ENCODE measurements at regions of chr11 and their contacts with region 1.

Region 1: DNA sequence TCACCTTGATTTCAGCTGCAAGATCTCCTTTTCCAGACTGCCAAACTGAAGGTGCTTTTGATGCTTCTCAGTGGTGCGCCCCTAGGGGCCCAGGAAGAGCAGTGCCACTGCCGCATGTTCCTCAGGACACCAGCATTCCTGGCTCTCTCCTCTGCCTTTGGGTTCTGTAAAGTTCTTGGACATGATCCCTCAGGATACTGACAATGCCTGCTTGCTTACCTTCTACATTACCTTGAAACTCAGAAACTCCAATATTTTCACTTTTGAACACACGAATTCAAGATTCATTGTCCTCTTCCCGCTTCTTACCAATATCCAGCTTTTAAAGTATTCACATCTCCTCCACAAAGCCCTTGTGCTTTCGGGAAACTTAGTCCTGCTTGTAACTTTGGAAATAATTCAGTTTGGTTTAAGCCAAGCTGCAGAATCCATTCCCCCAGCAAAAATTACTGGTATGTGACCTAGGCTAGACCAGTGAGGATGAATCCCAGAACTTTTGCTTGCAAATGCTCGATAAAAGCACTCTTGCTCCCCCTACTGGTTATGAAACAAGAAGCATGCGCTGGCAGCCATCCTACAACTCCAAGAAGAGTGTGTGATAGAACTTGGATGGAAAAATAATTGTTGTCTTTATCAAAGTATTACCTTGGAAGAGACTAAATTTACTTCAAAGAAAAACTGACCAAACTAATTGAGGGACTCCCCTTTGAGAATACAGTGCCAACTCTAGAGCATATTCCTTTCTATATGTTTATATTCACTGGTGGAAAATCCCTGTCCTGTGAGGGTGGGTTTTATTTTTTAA is 16.5 kb upstream of the OR5B21 start:
- DNase-seq: peak; percentile 71
- ATAC-seq: peak; percentile 98
- H3K4me3 ChIP-seq: peak overlapping the region in 1 of 2 experiments; percentile 2; a peak in 1 of 4 replicates
- H3K27ac ChIP-seq: no peak overlapping the region
- H3K4me1 ChIP-seq: peaks cover 0 to 8% of the 10 kb centered on the region in 2 experiments; a peak in 3 of 4 replicates
- H3K27me3 ChIP-seq: 0 out of 2 replicates have a peak, but pooled peaks cover 4% of the 10 kb centered on the region
- CTCF ChIP-seq: peak; percentile 67 to 99 (median 78)
- POLR2A ChIP-seq: no peak
- RAD21 ChIP-seq: peak; percentile 64

Region 2: DNA sequence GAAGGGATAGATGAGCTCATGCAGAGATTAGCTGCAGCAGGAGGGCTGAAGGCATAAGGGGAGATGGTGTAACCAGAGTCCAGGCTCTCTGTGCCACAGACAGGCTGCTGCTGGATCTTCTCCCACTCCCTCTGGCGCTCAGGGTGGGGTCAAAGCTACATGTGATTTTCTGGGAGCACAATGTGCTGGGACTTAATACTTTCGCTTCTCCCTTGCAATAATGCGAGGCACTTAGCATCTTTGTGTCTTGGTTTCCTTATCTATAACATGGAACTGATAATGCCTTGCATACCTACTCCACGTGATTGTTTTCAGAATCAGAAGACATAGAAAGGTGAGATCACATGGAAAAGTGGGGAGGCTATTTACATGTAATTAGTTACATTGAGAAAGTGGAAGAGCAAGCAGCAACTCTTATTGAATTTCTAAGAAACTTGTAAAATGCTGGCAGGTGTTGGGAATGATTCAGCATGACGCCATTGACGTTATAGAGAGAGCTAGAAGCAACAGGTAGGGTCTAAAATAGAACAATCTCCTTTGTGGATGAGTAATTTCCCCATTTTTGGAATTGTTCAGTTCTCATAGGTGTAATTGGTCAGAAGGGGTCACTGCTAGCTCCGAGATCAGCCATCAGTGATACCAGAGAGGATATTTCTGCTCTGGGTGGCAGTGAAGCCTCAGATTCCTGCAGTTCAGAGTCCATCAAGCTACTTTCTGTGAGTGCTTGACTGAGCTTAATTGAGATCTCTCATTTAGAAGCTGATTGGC is 390.9 kb before region 1 on chr11:
- CTCF ChIA-PET with region 1: no interaction called
- POLR2A ChIA-PET with region 1: no interaction called
- RAD21 ChIA-PET with region 1: no interaction called
- intact Hi-C with region 1: loop called (anchors 10 kb)
- DNase-seq: no peak
- ATAC-seq: no peak
- H3K4me3 ChIP-seq: no peak overlapping the region
- H3K27ac ChIP-seq: no peak overlapping the region
- H3K4me1 ChIP-seq: no peaks in the 10 kb centered on the region
- H3K27me3 ChIP-seq: no peaks in the 10 kb centered on the region
- CTCF ChIP-seq: 0 out of 6 replicates have a peak, but pooled peaks of 1 of the 3 experiments have one; percentile 8
- POLR2A ChIP-seq: no peak
- RAD21 ChIP-seq: 0 out of 2 replicates have a peak, but pooled peaks have one; percentile 28

Region 3: GRCh38 chr11:58354727-58355126 is 169.7 kb before region 1 on chr11:
- CTCF ChIA-PET with region 1: no interaction called
- POLR2A ChIA-PET with region 1: no interaction called
- RAD21 ChIA-PET with region 1: no interaction called
- intact Hi-C with region 1: no loop called
- DNase-seq: no peak
- ATAC-seq: no peak
- H3K4me3 ChIP-seq: no peak overlapping the region
- H3K27ac ChIP-seq: no peak overlapping the region
- H3K4me1 ChIP-seq: no peaks in the 10 kb centered on the region
- H3K27me3 ChIP-seq: no peaks in the 10 kb centered on the region
- CTCF ChIP-seq: no peak
- POLR2A ChIP-seq: no peak
- RAD21 ChIP-seq: no peak

Region 4: GRCh38 chr11:58580311-58580710 is 55.9 kb after region 1 on chr11:
- CTCF ChIA-PET with region 1: no interaction called
- POLR2A ChIA-PET with region 1: no interaction called
- RAD21 ChIA-PET with region 1: no interaction called
- intact Hi-C with region 1: no loop called
- DNase-seq: no peak
- ATAC-seq: no peak
- H3K4me3 ChIP-seq: peak overlapping the region; percentile 78 to 88
- H3K27ac ChIP-seq: no peak overlapping the region; the same call in 1 of the 2 replicates
- H3K4me1 ChIP-seq: peaks cover 15 to 23% of the 10 kb centered on the region in 2 experiments
- H3K27me3 ChIP-seq: no peaks in the 10 kb centered on the region
- CTCF ChIP-seq: no peak
- POLR2A ChIP-seq: no peak
- RAD21 ChIP-seq: no peak

Region 5: DNA sequence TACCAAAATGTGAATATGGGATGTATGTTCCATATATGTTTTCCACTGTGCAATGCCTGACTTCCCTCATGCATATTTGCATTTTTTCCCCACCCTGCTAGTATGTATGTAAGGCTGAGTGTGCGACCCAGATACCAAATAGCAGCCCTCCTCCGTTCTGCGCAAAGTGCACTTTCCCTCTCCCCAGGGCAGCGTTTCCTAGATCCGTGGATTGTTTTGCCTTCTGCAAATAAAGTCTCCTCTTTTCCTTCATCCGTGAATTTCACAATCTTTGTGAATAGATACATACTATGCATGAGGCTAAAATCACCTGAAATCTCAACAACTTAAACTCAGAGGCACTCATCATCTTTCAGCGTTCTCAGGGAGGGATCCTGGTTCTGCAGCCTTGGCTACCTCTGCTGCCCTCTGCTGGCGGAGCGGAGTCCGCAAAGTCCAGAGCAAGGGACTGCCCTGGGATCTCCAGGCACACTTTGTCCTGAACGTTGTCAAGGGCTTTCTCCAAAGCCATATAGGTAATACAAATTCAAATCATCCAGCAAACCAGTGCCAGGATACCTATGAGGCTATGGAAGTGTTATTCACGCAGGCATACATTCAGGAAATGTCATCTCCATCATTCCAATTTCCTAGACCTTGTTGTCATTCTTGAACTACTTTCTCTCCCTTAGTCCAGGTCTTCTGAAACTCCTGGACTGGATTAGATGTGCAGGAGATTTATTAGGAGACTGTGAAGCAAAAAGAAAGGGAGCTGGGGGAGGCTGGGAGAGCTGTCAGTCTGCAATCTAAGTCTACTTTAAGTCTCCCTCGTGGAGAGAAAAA is 151.1 kb after region 1 on chr11:
- CTCF ChIA-PET with region 1: no interaction called
- POLR2A ChIA-PET with region 1: no interaction called
- RAD21 ChIA-PET with region 1: no interaction called
- intact Hi-C with region 1: no loop called
- DNase-seq: peak; percentile 51
- ATAC-seq: peak; percentile 99
- H3K4me3 ChIP-seq: no peak overlapping the region
- H3K27ac ChIP-seq: no peak overlapping the region
- H3K4me1 ChIP-seq: no peaks in the 10 kb centered on the region; a peak in 1 of 4 replicates
- H3K27me3 ChIP-seq: no peaks in the 10 kb centered on the region
- CTCF ChIP-seq: peak; percentile 84 to 98 (median 97)
- POLR2A ChIP-seq: no peak
- RAD21 ChIP-seq: peak; percentile 76